ENCODE measurements at regions of chr1 and their contacts with region 1.

Region 1: GRCh38 chr1:59947047-59947938 is 20.7 kb upstream of the CYP2J2 start:
- DNase-seq: peak; percentile 57
- H3K4me3 Mint-ChIP-seq: no peak overlapping the region
- H3K27ac Mint-ChIP-seq: no peak overlapping the region
- H3K4me1 Mint-ChIP-seq: no peaks in the 10 kb centered on the region
- H3K27me3 Mint-ChIP-seq: peaks cover 13% of the 10 kb centered on the region

Region 2: DNA sequence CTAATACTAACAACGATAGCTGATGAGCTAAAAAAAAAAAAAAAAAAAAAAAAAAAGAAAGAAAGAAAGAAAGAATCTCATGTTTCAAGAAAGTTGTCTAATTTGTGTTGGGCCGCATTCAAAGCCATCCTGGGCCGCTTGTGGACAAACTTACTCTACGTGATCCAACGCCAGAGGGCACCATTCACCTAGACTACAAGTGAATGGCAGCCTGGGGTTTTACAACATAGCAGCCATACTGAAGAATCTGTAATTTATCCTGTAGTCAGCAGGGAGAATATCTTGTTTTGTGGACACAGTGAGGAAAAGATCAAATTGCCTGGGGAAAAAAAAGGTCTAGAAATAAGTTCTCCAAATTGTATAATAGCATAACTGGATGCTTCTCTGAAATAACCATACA is 67.7 kb before region 1 on chr1:
- CTCF ChIA-PET with region 1: interaction called, 66 read pairs
- POLR2A ChIA-PET with region 1: no interaction called
- DNase-seq: peak; percentile 48
- H3K4me3 Mint-ChIP-seq: no peak overlapping the region
- H3K27ac Mint-ChIP-seq: no peak overlapping the region
- H3K4me1 Mint-ChIP-seq: no peaks in the 10 kb centered on the region
- H3K27me3 Mint-ChIP-seq: peaks cover 2% of the 10 kb centered on the region

Region 3: GRCh38 chr1:59885160-59885832 is 62.0 kb before region 1 on chr1:
- CTCF ChIA-PET with region 1: interaction called, 66 read pairs
- POLR2A ChIA-PET with region 1: no interaction called
- DNase-seq: no peak
- H3K4me3 Mint-ChIP-seq: no peak overlapping the region
- H3K27ac Mint-ChIP-seq: no peak overlapping the region
- H3K4me1 Mint-ChIP-seq: no peaks in the 10 kb centered on the region
- H3K27me3 Mint-ChIP-seq: peaks cover 2% of the 10 kb centered on the region

Region 4: DNA sequence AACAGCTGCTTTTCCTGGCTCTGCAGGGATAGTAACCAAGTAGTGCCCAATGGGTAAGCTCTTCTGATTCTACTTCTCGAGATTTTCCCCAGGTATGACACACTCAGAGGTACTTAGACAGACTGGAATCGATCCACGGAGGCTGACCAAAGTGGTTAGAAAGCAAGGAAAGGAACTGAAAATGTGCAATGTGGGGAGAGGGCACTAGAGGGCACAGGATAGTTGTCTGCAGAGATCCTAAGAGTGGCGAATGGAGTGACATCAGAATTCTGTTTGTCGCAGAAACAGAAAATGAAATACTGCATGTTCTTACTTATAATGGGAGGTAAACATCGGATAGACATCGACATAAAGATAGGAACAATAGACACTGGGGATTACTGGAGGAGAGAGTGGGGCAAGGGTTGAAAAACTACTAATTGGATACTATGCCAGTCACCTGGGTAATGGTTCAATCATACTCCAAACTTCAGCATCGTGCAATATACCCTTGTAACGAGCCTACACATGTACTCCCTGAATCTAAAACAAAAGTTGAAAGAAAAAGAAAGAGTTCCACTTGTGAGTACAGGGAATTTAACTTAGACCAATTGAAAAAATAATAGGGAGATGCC is 44.0 kb before region 1 on chr1:
- CTCF ChIA-PET with region 1: interaction called, 47 read pairs
- POLR2A ChIA-PET with region 1: interaction called, 3 read pairs
- DNase-seq: peak; percentile 28
- H3K4me3 Mint-ChIP-seq: no peak overlapping the region
- H3K27ac Mint-ChIP-seq: no peak overlapping the region
- H3K4me1 Mint-ChIP-seq: peaks cover 3% of the 10 kb centered on the region
- H3K27me3 Mint-ChIP-seq: no peaks in the 10 kb centered on the region

Region 5: DNA sequence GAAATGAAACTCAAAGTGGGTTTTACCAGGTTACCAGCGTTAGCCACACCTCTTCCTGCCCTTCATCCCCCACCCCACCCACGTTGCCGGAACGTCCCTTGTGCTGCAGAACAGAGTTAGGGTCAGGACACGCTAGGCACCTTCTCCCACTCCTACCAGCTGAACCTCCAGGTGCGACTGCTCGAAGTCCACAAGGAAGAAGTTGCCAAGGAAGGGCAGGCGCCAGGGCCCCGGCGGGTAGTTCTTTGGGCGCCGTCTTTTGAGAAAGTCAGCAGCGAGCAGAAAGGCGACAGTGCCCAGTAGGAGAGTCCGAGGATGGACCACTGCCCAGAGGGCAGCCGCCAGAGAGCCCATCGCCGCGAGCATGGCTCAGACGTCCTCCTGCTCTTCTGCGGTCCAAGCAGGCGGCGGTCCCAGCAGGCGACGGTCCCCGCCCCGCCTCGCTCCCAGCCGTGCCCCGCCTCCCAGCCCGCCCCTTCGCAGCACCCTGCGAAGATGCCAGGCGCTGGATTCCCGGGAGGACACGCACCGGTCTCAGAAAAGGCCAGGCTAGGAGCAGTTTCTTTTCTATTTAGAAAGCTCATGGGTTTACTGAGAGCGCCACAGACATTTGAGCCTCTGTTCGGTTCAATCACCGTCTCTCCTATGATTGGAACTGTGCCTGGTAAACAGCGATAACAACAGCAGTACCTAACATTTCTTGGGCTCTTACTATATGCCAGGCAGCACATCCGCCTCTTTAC is 20.7 kb before region 1 on chr1 and contains the start of gene CYP2J2:
- CTCF ChIA-PET with region 1: interaction called, 10 read pairs
- POLR2A ChIA-PET with region 1: no interaction called
- DNase-seq: peak; percentile 39
- H3K4me3 Mint-ChIP-seq: peak within 1 kb of the TSS; percentile 76
- H3K27ac Mint-ChIP-seq: peak within 1 kb of the TSS; percentile 28
- H3K4me1 Mint-ChIP-seq: peaks cover 13% of the 10 kb centered on the region
- H3K27me3 Mint-ChIP-seq: peaks cover 49% of the 10 kb centered on the region
- total RNA-seq, gene CYP2J2: 2.8 TPM

Region 6: GRCh38 chr1:59971464-59971911 is 24.2 kb after region 1 on chr1:
- CTCF ChIA-PET with region 1: interaction called, 10 read pairs
- POLR2A ChIA-PET with region 1: no interaction called
- DNase-seq: peak; percentile 43
- H3K4me3 Mint-ChIP-seq: no peak overlapping the region
- H3K27ac Mint-ChIP-seq: no peak overlapping the region
- H3K4me1 Mint-ChIP-seq: peaks cover 3% of the 10 kb centered on the region
- H3K27me3 Mint-ChIP-seq: peaks cover 21% of the 10 kb centered on the region

Measured in activated CD4-positive, alpha-beta memory T cell treated with anti-CD3 and anti-CD28 coated beads, Interleukin-2, amount 10 ng/mL, durations not matched to agents 7 days and 5 days (primary cell).